ENCODE measurements at regions of chr14 and their contacts with region 1.

Region 1: GRCh38 chr14:81533536-81534343 is at the start of gene SEL1L:
- DNase-seq: peak; percentile 100
- H3K4me3 Mint-ChIP-seq: peak within 1 kb of the TSS; percentile 90
- H3K27ac Mint-ChIP-seq: peak within 1 kb of the TSS; percentile 75
- H3K4me1 Mint-ChIP-seq: peaks cover 59% of the 10 kb centered on the region
- H3K27me3 Mint-ChIP-seq: no peaks in the 10 kb centered on the region
- total RNA-seq, gene SEL1L: 49.0 to 50.2 TPM

Region 2: GRCh38 chr14:80941241-80942182 is 592.2 kb before region 1 on chr14 and contains the start of gene CEP128:
- CTCF ChIA-PET with region 1: no interaction called
- POLR2A ChIA-PET with region 1: no interaction called
- intact Hi-C with region 1: loop called (anchors 5 kb)
- DNase-seq: peak; percentile 92
- H3K4me3 Mint-ChIP-seq: peak within 1 kb of the TSS; percentile 88
- H3K27ac Mint-ChIP-seq: peak within 1 kb of the TSS; percentile 93
- H3K4me1 Mint-ChIP-seq: peaks cover 37% of the 10 kb centered on the region
- H3K27me3 Mint-ChIP-seq: no peaks in the 10 kb centered on the region
- total RNA-seq, gene CEP128: 19.4 to 22.8 TPM

Region 3: GRCh38 chr14:81416194-81416952 is 117.4 kb before region 1 on chr14:
- CTCF ChIA-PET with region 1: no interaction called
- POLR2A ChIA-PET with region 1: no interaction called
- intact Hi-C with region 1: no loop called
- DNase-seq: no peak
- H3K4me3 Mint-ChIP-seq: no peak overlapping the region
- H3K27ac Mint-ChIP-seq: no peak overlapping the region
- H3K4me1 Mint-ChIP-seq: no peaks in the 10 kb centered on the region
- H3K27me3 Mint-ChIP-seq: peaks cover 3% of the 10 kb centered on the region

Region 4: DNA sequence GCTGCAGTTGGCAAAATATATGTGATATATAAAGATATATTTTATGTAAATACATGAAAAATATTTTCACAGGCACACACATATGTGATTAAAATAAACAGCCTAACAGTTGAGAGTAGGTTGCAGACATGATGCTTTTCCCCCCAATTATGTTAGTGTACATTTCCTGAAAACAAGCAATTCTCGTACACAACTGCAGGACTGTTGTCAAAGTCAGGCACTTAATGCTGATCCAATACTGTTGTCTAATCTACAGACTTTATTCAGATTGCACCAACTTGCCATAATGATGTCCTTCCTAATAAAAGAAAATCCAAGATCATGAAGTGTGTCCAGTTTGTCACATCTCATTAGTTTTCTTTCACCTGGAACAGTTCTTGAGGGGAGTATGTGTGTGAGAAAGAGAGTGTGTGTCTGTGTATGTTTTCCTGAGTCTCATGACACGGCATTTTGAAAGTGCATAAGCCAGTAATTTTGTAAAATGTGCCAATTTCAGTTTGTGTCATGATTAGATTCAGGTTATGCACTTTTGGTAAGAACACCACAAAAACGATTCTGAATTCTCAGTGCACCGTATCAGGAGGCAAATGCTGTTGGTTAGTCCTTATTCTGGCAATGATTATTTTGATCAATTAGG is 16.4 kb after region 1 on chr14:
- CTCF ChIA-PET with region 1: no interaction called
- POLR2A ChIA-PET with region 1: no interaction called
- intact Hi-C with region 1: loop called (anchors 1 kb)
- DNase-seq: no peak
- H3K4me3 Mint-ChIP-seq: no peak overlapping the region
- H3K27ac Mint-ChIP-seq: no peak overlapping the region
- H3K4me1 Mint-ChIP-seq: peaks cover 23% of the 10 kb centered on the region
- H3K27me3 Mint-ChIP-seq: peaks cover 2% of the 10 kb centered on the region